HepG2 (cell line): ENCODE measurements at regions of chr14 and their contacts with region 1.

Region 1: GRCh38 chr14:96067985-96068930 is 29.1 kb downstream of the C14orf132 start:
- DNase-seq: no peak
- ATAC-seq: no peak
- H3K4me3 ChIP-seq: no peak overlapping the region
- H3K27ac ChIP-seq: no peak overlapping the region
- H3K4me1 ChIP-seq: no peaks in the 10 kb centered on the region
- H3K27me3 ChIP-seq: peaks cover 2 to 8% of the 10 kb centered on the region in 2 experiments; a peak in 3 of 5 replicates
- CTCF ChIP-seq: no peak
- EP300 ChIP-seq: no peak
- POLR2A ChIP-seq: no peak
- RAD21 ChIP-seq: no peak

Region 2: DNA sequence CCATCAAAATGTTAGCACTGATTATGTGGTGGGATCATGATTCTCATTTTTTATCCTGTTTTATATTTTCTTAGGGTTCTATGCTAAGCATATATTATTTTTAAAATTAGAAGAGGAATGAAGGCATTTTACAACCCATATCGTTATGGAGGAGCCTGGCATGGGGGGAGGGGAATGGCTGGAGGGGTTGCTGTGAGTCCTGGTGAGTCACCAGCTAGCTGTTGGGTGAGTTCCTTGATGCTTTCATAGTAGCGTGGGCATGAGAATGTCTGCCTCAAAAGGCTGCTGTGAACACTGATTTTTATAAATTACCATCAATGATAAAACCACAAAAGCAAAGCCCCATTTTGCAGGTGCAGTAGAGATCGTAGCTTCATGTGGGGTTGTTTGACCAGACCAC is 17.8 kb after region 1 on chr14:
- CTCF ChIA-PET with region 1: no interaction called
- POLR2A ChIA-PET with region 1: no interaction called
- in situ Hi-C with region 1: no loop called
- intact Hi-C with region 1: loop called (anchors 1 kb)
- DNase-seq: no peak
- ATAC-seq: no peak
- H3K4me3 ChIP-seq: no peak overlapping the region
- H3K27ac ChIP-seq: no peak overlapping the region
- H3K4me1 ChIP-seq: no peaks in the 10 kb centered on the region
- H3K27me3 ChIP-seq: peaks cover 0 to 16% of the 10 kb centered on the region in 2 experiments; a peak in 2 of 5 replicates
- CTCF ChIP-seq: no peak
- EP300 ChIP-seq: no peak
- POLR2A ChIP-seq: no peak
- RAD21 ChIP-seq: no peak